HEK293 (cell line): ENCODE measurements at regions of chr5 and their contacts with region 1.

Region 1: DNA sequence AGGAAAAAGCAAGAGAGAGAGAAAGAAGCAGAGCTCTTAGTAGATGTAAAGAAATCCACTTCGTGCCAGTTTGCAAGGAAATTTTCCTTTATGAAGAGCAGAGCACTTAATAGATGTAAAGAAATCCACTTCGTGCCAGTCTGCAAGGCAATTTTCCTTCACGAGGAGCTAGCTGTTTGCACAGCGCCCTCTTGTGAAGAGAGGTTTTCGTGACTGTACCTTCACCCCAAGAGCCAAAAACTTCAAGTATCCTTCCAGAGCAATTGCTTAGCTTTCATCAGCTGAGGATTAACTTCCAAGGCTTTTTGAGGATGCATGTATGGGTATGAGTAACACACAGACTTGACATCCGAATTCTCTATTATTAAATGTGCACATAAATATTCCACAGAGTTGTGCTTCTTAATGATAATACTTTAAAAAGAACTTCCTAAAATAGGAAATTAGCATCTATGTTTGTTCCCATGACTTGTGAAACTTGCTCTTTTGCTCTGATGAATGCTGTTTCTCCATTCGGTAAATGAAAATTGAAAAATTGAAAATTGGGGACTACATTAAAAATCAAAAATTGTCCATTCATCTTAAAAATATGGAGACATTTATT is 525.6 kb downstream of the PDE4D start:
- H3K4me3 ChIP-seq: no peak overlapping the region
- H3K27ac ChIP-seq: no peak overlapping the region
- H3K4me1 ChIP-seq: peaks cover 18% of the 10 kb centered on the region
- CTCF ChIP-seq: peak; percentile 69; the same call in 1 of the 2 replicates

Region 2: GRCh38 chr5:59216841-59217240 is 151.1 kb before region 1 on chr5:
- CTCF ChIA-PET with region 1: interaction called, 25 read pairs
- POLR2A ChIA-PET with region 1: no interaction called
- H3K4me3 ChIP-seq: no peak overlapping the region
- H3K27ac ChIP-seq: no peak overlapping the region
- H3K4me1 ChIP-seq: peaks cover 10% of the 10 kb centered on the region
- CTCF ChIP-seq: no peak

Region 3: DNA sequence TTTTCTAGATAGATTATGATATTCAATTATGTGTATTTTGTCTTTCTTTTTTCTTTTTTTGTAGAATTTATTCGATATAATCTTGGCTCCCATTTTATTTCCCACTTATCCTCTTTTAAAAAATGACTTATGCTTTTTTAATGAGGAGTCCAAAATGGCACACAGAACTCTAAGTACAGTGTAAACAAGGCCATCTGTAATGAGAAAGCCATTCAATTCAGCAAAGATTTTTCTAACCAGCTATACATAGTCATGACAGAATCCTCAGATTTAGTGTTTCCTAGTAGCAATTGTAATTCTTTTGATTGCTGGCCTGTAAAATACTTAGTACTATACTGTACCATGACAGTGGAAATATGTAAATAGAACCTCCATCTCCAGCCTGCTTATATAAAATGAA is 133.7 kb before region 1 on chr5:
- CTCF ChIA-PET with region 1: interaction called, 10 read pairs
- POLR2A ChIA-PET with region 1: no interaction called
- H3K4me3 ChIP-seq: no peak overlapping the region
- H3K27ac ChIP-seq: no peak overlapping the region
- H3K4me1 ChIP-seq: peaks cover 2% of the 10 kb centered on the region; the same call in 1 of the 2 replicates
- CTCF ChIP-seq: no peak

Region 4: DNA sequence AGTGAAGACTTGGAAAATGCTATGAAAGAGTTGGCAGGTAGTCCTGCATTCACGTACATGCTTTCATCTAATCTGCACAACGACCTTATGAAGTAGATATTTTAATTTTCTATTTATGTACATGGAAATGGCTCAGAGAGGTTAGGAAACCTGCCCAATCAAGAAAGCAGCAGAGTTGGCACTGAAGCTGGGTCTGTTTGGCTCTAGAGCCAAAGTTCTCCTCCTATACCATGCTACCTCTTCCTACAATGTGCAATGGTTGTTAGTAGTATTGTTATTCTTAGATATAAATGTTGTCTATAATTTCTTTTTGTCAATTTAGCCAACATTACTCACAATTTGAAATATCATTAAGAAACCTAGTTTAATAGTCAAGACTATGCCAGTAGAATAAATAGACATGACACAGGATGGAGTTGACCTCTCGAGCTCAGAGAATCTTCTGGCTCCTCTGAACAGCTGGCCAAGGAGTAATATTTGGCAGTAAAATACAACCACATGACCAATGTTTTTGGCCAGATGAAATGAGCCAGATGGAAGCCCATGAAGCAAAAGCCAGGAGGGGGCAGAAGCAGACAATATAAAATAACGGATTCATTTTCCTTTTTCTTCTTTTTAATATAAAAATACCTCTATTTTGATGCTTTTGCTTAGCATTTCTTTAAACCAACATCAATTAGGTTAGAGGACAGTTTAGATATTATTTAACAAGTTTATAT is 16.7 kb before region 1 on chr5:
- CTCF ChIA-PET with region 1: interaction called, 19 read pairs
- POLR2A ChIA-PET with region 1: no interaction called
- H3K4me3 ChIP-seq: no peak overlapping the region
- H3K27ac ChIP-seq: no peak overlapping the region
- H3K4me1 ChIP-seq: peaks cover 29% of the 10 kb centered on the region
- CTCF ChIP-seq: no peak

Region 5: GRCh38 chr5:59380350-59380951 is 12.6 kb after region 1 on chr5:
- CTCF ChIA-PET with region 1: interaction called, 17 read pairs
- POLR2A ChIA-PET with region 1: no interaction called
- H3K4me3 ChIP-seq: no peak overlapping the region
- H3K27ac ChIP-seq: no peak overlapping the region
- H3K4me1 ChIP-seq: peaks cover 3% of the 10 kb centered on the region
- CTCF ChIP-seq: peak; percentile 25; the same call in 1 of the 2 replicates

Region 6: DNA sequence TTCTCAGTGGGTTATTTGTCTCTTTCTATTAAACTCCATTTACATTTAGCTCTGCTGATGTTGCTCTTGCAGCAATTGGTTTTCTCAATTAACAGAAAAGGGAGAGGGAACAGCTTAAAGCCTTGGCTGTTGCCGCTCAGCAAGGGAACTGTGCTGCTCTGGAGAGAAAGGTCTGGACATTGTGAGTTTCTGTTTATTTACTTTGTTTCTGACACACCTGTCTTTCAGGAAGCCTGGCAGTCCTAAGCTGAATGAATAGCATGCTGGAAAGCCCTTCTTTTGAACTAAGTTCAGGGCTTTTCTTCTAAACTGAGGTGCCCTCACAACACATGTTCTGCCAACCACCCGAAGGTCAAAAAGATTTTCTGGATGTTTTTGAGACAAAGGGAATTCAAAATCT is 33.7 kb after region 1 on chr5:
- CTCF ChIA-PET with region 1: no interaction called
- POLR2A ChIA-PET with region 1: no interaction called
- H3K4me3 ChIP-seq: no peak overlapping the region
- H3K27ac ChIP-seq: no peak overlapping the region
- H3K4me1 ChIP-seq: no peaks in the 10 kb centered on the region
- CTCF ChIP-seq: no peak